Panc1 (cell line): ENCODE measurements at regions of chr7 and their contacts with region 1.

Region 1: GRCh38 chr7:13067036-13067435 is 379.6 kb downstream of the ARL4A start:
- DNase-seq: no peak
- ATAC-seq: no peak
- H3K4me3 ChIP-seq: no peak overlapping the region
- H3K27ac ChIP-seq: no peak overlapping the region
- H3K4me1 ChIP-seq: no peaks in the 10 kb centered on the region
- H3K27me3 ChIP-seq: no peaks in the 10 kb centered on the region
- CTCF ChIP-seq: no peak

Region 2: GRCh38 chr7:13017333-13017853 is 49.6 kb before region 1 on chr7:
- CTCF ChIA-PET with region 1: interaction called, 3 read pairs
- POLR2A ChIA-PET with region 1: interaction called, 13 read pairs
- in situ Hi-C with region 1: no loop called
- intact Hi-C with region 1: no loop called
- DNase-seq: no peak
- ATAC-seq: peak; percentile 68; the same call in 1 of the 2 replicates
- H3K4me3 ChIP-seq: peak overlapping the region in 1 of 2 experiments; percentile 19; a peak in 1 of 4 replicates
- H3K27ac ChIP-seq: no peak overlapping the region
- H3K4me1 ChIP-seq: 0 out of 2 replicates have a peak, but pooled peaks cover 6% of the 10 kb centered on the region
- H3K27me3 ChIP-seq: no peaks in the 10 kb centered on the region
- CTCF ChIP-seq: no peak

Region 3: DNA sequence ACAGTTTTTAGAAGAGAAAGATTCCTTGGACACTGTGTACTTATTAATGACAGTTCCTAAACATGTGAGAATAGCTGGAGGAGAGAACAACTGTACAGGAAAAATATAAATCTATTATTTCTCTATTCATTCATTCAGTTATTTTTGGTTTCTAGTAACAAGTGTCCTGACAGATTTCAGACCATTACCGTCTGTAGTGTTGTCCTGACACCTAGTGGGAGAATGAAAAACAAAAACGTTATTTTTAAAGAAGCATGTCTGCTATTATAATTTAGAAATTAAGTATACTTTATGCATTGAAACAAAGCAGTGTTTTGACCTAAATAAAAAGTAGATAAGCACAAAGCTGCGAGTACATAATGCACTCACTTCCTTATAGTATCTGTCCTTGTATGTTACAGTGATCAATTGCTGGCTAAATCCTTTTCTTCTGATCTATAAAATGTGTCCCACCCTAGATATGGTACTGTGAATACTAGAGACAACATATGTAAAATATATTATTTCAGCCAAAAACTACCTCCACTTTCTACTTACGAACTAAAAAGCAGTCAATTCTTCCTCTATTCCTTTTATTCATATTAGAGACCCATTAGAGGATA is 196.0 kb after region 1 on chr7:
- CTCF ChIA-PET with region 1: no interaction called
- POLR2A ChIA-PET with region 1: interaction called, 10 read pairs
- in situ Hi-C with region 1: no loop called
- intact Hi-C with region 1: no loop called
- DNase-seq: no peak
- ATAC-seq: no peak; the same call in none of the 2 replicates
- H3K4me3 ChIP-seq: no peak overlapping the region
- H3K27ac ChIP-seq: no peak overlapping the region
- H3K4me1 ChIP-seq: no peaks in the 10 kb centered on the region
- H3K27me3 ChIP-seq: no peaks in the 10 kb centered on the region; the same call in 1 of the 2 replicates
- CTCF ChIP-seq: peak; percentile 67; the same call in 1 of the 2 replicates